Activated CD4-positive, alpha-beta T cell treated with anti-CD3 and anti-CD28 coated beads for 36 hours (primary cell): ENCODE measurements at regions of chr18 and their contacts with region 1.

Region 1: GRCh38 chr18:3454365-3455089 is 4.6 kb downstream of the TGIF1 start:
- DNase-seq: peak; percentile 40
- ATAC-seq: no peak
- H3K4me3 Mint-ChIP-seq: peak overlapping the region; percentile 94
- H3K27ac Mint-ChIP-seq: peak overlapping the region; percentile 99
- H3K4me1 Mint-ChIP-seq: peaks cover 67% of the 10 kb centered on the region
- H3K27me3 Mint-ChIP-seq: no peaks in the 10 kb centered on the region

Region 2: DNA sequence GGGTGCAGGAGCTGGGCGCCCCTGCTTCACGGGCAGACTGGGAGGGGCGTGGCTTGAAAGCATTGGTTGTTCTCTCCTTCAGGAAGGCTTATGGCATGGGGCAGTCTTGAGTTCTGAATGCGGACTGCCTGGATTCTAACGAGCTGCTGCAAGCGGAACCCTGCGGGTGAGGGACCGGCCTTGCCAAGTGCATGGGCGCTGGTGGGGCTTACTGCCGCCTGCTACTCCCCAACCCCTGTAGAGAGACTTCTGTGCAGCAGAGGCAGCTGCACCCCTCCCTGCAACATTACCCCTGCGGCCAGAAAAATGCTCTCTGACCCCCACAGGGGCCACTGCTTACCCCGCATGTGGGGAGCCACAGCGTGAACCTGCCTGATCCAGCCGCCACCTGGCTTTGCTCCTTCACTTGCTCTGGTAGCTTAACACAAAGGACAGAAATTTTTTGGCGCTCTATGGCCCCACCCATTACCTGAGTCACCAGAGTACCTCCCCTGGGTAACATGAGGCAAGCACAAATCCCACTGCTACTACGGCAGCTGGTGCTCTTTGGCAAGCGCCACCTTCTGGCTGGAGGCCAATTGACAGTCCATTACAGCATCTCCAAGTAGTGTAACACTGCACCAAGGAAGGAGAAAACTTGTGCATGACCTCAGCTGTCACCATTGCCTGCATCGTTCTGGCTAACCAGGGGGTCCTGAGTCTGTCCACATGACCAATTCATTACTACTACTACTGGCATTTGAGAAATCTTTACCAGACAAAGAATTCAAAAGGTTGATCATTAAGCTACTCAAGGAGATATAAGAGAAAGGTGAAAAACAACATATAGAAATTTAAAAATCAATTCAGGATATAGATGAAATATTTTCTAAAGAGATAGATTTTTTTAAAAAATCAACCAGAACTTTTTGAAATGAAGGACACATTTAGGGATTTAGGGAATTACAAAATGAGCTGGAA is 157.2 kb before region 1 on chr18:
- CTCF ChIA-PET with region 1: interaction called, 24 read pairs
- POLR2A ChIA-PET with region 1: no interaction called
- intact Hi-C with region 1: loop called (anchors 1 to 5 kb)
- DNase-seq: peak; percentile 97
- ATAC-seq: peak; percentile 97
- H3K4me3 Mint-ChIP-seq: peak overlapping the region; percentile 87
- H3K27ac Mint-ChIP-seq: peak overlapping the region; percentile 78
- H3K4me1 Mint-ChIP-seq: peaks cover 2% of the 10 kb centered on the region
- H3K27me3 Mint-ChIP-seq: peaks cover 22% of the 10 kb centered on the region

Region 3: GRCh38 chr18:3466045-3466444 is 11.5 kb after region 1 on chr18:
- CTCF ChIA-PET with region 1: interaction called, 14 read pairs
- POLR2A ChIA-PET with region 1: no interaction called
- intact Hi-C with region 1: no loop called
- DNase-seq: no peak
- ATAC-seq: no peak
- H3K4me3 Mint-ChIP-seq: no peak overlapping the region
- H3K27ac Mint-ChIP-seq: no peak overlapping the region
- H3K4me1 Mint-ChIP-seq: peaks cover 26% of the 10 kb centered on the region
- H3K27me3 Mint-ChIP-seq: no peaks in the 10 kb centered on the region

Region 4: DNA sequence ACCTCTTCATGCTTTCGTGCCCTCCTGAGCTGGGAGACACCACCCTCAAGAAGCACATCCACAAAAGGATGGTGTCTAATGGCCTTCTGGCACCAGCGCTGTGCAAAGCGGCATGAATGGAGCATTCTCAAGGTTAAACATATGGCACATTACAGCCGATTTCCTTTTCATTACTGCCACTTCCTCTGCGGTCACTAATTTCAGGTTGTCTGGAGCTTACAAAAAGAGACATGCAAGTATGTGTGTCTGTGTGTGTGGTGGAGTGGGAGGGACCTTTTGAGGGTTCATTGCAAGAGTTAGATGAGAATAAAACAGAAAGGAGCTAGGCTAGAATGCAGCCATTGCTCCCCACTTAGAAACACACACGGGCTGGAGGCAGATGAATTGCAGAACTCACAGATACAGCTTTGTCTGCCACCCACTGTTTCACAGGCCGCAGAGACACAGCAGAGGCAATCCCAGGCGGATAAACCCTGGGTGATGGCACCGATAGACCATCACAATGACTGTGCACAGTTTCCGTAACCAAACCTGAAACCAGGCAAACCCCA is 71.4 kb after region 1 on chr18:
- CTCF ChIA-PET with region 1: interaction called, 4 read pairs
- POLR2A ChIA-PET with region 1: interaction called, 3 read pairs
- intact Hi-C with region 1: loop called in 1 of 2 experiments (anchors 2 kb)
- DNase-seq: peak; percentile 69
- ATAC-seq: peak; percentile 91
- H3K4me3 Mint-ChIP-seq: peak overlapping the region; percentile 6
- H3K27ac Mint-ChIP-seq: peak overlapping the region; percentile 12
- H3K4me1 Mint-ChIP-seq: peaks cover 16% of the 10 kb centered on the region
- H3K27me3 Mint-ChIP-seq: peaks cover under 1% of the 10 kb centered on the region

Region 5: DNA sequence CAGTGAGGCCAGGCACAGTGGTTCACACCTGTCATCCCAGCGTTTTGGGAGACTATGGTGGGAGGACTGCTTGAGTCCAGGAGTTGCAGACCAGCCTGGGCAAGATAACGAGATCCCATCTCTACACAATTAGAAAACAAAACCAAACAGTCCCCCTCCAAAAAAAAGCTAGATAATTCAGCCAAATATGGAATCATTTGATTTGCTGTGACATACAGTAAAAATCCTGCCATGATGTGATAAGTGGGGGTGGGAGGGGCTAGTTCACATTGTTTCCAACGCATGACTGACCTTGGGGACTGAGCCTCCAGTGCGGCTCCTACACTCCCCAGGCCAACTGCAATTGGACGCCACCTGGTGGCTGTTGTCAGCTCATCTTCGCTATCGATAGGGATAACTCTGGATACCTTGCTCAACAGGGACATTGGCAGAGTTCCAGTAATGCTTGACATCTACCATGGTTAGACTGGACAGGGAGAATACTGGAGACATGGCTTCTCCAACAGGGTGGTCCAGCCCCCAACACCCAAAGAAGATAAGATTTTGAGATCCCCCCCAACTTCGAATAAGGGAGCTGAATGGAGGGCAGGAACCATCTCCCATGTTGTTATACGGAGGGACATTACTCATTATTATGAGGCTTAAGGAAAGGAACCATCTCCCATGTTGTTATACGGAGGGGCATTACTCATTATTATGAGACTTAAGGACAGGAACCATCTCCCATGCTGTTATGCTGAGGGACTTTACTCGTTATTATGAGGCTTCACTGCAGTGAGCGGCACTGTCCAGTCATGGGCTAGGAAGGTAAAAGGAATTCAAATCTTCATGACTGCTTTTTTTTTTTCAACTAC is 131.4 kb after region 1 on chr18:
- CTCF ChIA-PET with region 1: interaction called, 17 read pairs
- POLR2A ChIA-PET with region 1: no interaction called
- intact Hi-C with region 1: loop called in 1 of 2 experiments (anchors 1 kb)
- DNase-seq: peak; percentile 88
- ATAC-seq: peak; percentile 72
- H3K4me3 Mint-ChIP-seq: no peak overlapping the region
- H3K27ac Mint-ChIP-seq: peak overlapping the region; percentile 59
- H3K4me1 Mint-ChIP-seq: peaks cover 46% of the 10 kb centered on the region
- H3K27me3 Mint-ChIP-seq: no peaks in the 10 kb centered on the region

Region 6: GRCh38 chr18:3652380-3653262 is 198.1 kb after region 1 on chr18:
- CTCF ChIA-PET with region 1: no interaction called
- POLR2A ChIA-PET with region 1: no interaction called
- intact Hi-C with region 1: loop called in 1 of 2 experiments (anchors 2 kb)
- DNase-seq: peak; percentile 90
- ATAC-seq: peak; percentile 97
- H3K4me3 Mint-ChIP-seq: peak overlapping the region; percentile 27
- H3K27ac Mint-ChIP-seq: peak overlapping the region; percentile 91
- H3K4me1 Mint-ChIP-seq: peaks cover 46% of the 10 kb centered on the region
- H3K27me3 Mint-ChIP-seq: no peaks in the 10 kb centered on the region

Region 7: GRCh38 chr18:3726238-3726951 is 271.9 kb after region 1 on chr18:
- CTCF ChIA-PET with region 1: no interaction called
- POLR2A ChIA-PET with region 1: no interaction called
- intact Hi-C with region 1: no loop called
- DNase-seq: no peak
- ATAC-seq: no peak
- H3K4me3 Mint-ChIP-seq: no peak overlapping the region
- H3K27ac Mint-ChIP-seq: no peak overlapping the region
- H3K4me1 Mint-ChIP-seq: no peaks in the 10 kb centered on the region
- H3K27me3 Mint-ChIP-seq: peaks cover 10% of the 10 kb centered on the region

Region 8: GRCh38 chr18:3910512-3910911 is 456.0 kb after region 1 on chr18:
- CTCF ChIA-PET with region 1: no interaction called
- POLR2A ChIA-PET with region 1: no interaction called
- intact Hi-C with region 1: no loop called
- DNase-seq: no peak
- ATAC-seq: no peak
- H3K4me3 Mint-ChIP-seq: no peak overlapping the region
- H3K27ac Mint-ChIP-seq: no peak overlapping the region
- H3K4me1 Mint-ChIP-seq: no peaks in the 10 kb centered on the region
- H3K27me3 Mint-ChIP-seq: no peaks in the 10 kb centered on the region